GM18951 (cell line): ENCODE measurements at regions of chr11 and their contacts with region 1.

Region 1: DNA sequence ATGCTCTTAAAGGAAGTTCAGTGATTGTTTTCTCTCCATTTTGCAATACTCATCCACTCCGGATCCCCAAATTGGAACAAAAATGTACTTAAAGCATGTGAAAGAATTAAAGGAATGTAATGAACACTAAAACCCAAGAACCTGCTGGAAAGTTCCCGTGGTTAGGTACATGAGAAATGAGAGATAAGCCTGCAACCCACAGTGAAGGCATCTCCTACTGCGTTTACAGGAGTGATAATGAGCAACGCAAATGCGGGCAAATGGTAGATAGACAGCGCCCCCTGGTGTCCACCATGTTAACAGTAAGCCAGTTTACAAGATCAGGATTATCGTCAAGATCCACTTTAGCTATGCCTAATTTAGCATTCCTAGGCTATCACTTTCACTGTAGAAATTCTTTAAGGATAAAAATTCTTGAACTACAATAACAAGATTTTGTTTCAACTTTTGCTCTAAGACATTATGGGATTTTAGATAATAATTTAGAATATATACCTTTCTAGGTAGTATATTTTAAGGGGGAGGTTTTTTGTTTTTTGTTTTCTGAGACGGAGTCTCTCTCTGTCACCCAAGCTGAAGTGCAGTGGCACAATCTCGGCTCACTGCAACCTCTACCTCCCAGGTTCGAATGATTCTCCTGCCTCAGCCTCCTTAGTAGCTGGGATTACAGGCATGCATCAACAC is 29.9 kb downstream of the ALG9 start:
- POLR2A ChIP-seq: no peak

Region 2: GRCh38 chr11:111526501-111526900 is 315.0 kb before region 1 on chr11:
- in situ Hi-C with region 1: no loop called
- POLR2A ChIP-seq: no peak

Region 3: GRCh38 chr11:111601979-111602864 is 239.3 kb before region 1 on chr11 and contains the start of gene SIK2:
- in situ Hi-C with region 1: loop called (anchors 5 kb)
- POLR2A ChIP-seq: peak; percentile 43

Region 4: DNA sequence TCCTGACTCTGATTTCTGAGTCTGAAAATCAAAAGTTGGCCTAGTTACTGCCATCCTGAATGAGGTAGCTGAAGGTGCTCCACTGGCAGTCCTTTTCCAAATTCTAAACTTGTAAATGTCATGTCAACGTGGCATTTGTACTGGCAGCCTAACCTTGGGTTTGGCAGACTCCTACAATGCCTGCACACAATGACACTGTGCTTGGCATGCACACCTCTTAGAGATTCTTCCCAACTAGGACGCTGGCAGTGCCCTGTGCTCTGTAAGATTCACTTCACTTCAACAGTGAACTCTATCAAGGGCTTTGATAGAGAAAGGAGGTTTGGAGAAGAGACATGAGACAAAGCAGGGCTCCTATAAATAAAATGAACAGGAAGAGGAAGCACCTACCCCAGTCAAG is 53.5 kb before region 1 on chr11:
- in situ Hi-C with region 1: loop called (anchors 10 kb)
- POLR2A ChIP-seq: no peak